ENCODE measurements at regions of chr1 and their contacts with region 1.

Region 1: DNA sequence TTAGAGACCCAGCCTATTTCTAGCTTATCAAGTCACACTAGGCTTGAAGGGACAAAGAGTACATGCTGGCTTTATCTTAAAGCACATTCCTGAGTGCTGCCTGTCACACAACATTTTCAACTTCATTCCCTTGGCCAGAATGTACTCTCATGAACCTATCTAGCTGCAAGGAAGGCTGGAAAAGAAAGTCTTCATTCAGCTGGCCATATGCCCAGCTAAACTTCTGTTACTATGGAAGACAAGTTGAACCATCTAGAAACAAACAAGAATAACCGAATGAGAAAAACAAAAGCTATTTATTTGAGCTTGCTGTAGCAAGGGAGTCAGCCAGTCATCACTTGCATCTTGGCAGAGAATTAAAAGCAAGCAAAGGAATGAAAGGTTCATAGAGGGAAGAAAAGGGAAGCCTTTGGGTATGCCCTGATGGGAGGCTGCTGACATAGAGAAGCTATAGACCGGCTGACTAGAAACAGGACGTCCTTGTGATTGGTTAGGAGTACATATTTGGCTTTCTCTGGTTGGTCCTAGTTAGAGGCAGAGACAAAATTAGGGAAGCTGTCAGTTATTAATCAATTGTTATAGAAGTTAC is 108.4 kb downstream of the NEK7 start:
- DNase-seq: peak; percentile 22 to 81 (median 60)
- H3K4me3 ChIP-seq: peak overlapping the region in 1 of 7 experiments; percentile 36
- H3K27ac ChIP-seq: peak overlapping the region in 1 of 2 experiments; percentile 37
- H3K4me1 ChIP-seq: peaks cover 0 to 26% (median 10%) of the 10 kb centered on the region in 4 experiments
- H3K27me3 ChIP-seq: no peaks in the 10 kb centered on the region

Region 2: GRCh38 chr1:198254246-198254920 is 10.8 kb before region 1 on chr1:
- CTCF ChIA-PET with region 1: interaction called, 11 read pairs
- POLR2A ChIA-PET with region 1: no interaction called
- DNase-seq: peak in 2 of 3 donors; percentile 47 to 57
- H3K4me3 ChIP-seq: no peak overlapping the region
- H3K27ac ChIP-seq: no peak overlapping the region
- H3K4me1 ChIP-seq: peaks cover 0 to 22% (median 7%) of the 10 kb centered on the region in 4 experiments
- H3K27me3 ChIP-seq: no peaks in the 10 kb centered on the region